PC-9 (cell line): ENCODE measurements at regions of chr9 and their contacts with region 1.

Region 1: GRCh38 chr9:107489687-107490605 is at the start of gene KLF4:
- DNase-seq: peak; percentile 78 to 92
- H3K4me3 ChIP-seq: peak within 1 kb of the TSS; percentile 100
- H3K27ac ChIP-seq: peak within 1 kb of the TSS; percentile 85
- H3K4me1 ChIP-seq: peaks cover 29% of the 10 kb centered on the region
- H3K27me3 ChIP-seq: no peaks in the 10 kb centered on the region
- CTCF ChIP-seq: no peak
- total RNA-seq, gene KLF4: 48.5 and 49.0 TPM in 2 replicates

Region 2: DNA sequence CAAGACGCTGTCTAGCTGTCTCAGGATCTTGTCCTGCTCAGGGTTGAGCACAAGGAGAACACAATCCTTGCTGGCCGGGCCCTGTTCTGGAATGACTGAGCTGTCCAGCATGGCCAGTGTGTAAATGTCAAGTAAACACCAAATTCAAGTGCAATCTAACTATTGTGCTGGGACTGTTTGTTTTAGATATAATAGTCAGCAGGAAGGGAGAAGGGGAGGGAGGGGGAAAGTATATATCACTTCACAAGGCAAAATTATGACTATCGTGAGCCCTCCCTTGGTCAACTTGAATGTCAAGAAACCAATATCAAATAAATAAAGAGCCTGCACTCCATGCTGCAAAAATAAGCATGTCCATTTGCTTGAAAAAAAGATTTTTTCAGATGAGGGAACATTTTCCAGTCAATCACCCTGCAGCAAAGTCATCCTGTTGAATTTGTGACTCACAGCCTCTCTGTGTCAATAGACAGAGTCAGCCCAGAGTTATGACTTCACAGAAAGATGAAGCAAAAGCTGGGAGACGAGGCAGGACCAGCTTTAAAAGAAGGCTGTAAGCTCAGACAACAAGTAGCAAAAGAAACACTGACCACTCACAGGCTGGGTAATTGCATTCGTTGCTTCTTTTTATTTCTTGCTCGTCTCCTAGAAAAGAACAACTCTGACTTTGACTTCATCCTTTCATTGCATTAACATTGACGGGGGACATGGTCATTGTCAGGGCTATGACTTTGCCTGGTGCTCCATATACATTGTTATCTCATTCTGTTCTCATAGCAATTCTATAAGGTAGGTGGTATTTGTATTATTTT is 14.8 kb after region 1 on chr9:
- CTCF ChIA-PET with region 1: no interaction called
- POLR2A ChIA-PET with region 1: interaction called, 14 read pairs
- intact Hi-C with region 1: no loop called
- DNase-seq: peak; percentile 52 to 95
- H3K4me3 ChIP-seq: peak overlapping the region; percentile 26; the same call in 1 of the 2 replicates
- H3K27ac ChIP-seq: peak overlapping the region; percentile 91
- H3K4me1 ChIP-seq: peaks cover 24% of the 10 kb centered on the region
- H3K27me3 ChIP-seq: no peaks in the 10 kb centered on the region
- CTCF ChIP-seq: no peak

Region 3: DNA sequence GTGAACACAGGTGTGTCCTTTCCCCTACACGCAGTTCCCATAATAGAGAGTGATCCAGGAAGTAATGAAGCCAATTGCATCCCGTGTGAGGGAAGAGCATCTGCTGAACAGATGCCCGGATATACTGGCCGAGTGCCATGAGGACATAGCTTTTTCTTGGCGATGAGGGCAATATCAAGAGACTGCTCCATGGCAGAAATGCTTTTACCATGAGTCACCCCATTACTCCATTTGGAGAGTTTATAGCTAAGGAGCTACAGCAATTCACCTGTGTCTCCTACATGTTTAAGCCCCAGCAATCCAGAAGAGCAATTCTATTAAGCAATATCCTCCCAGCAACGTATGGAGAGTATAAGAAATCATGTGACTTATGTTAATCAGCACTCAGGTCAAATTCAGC is 221.6 kb after region 1 on chr9:
- CTCF ChIA-PET with region 1: no interaction called
- POLR2A ChIA-PET with region 1: no interaction called
- intact Hi-C with region 1: loop called (anchors 2 kb)
- DNase-seq: peak; percentile 80 to 92
- H3K4me3 ChIP-seq: no peak overlapping the region
- H3K27ac ChIP-seq: peak overlapping the region; percentile 79
- H3K4me1 ChIP-seq: peaks cover 28% of the 10 kb centered on the region
- H3K27me3 ChIP-seq: no peaks in the 10 kb centered on the region
- CTCF ChIP-seq: no peak

Region 4: GRCh38 chr9:107847978-107848964 is 358.3 kb after region 1 on chr9:
- CTCF ChIA-PET with region 1: no interaction called
- POLR2A ChIA-PET with region 1: no interaction called
- intact Hi-C with region 1: loop called (anchors 10 kb)
- DNase-seq: peak in 1 of 2 experiments; percentile 46
- H3K4me3 ChIP-seq: no peak overlapping the region
- H3K27ac ChIP-seq: no peak overlapping the region
- H3K4me1 ChIP-seq: peaks cover 12% of the 10 kb centered on the region; the same call in 1 of the 2 replicates
- H3K27me3 ChIP-seq: no peaks in the 10 kb centered on the region
- CTCF ChIP-seq: no peak

Region 5: GRCh38 chr9:108053555-108054061 is 563.7 kb after region 1 on chr9:
- CTCF ChIA-PET with region 1: no interaction called
- POLR2A ChIA-PET with region 1: no interaction called
- intact Hi-C with region 1: loop called (anchors 2 kb)
- DNase-seq: no peak
- H3K4me3 ChIP-seq: no peak overlapping the region
- H3K27ac ChIP-seq: no peak overlapping the region
- H3K4me1 ChIP-seq: peaks cover 58% of the 10 kb centered on the region
- H3K27me3 ChIP-seq: no peaks in the 10 kb centered on the region
- CTCF ChIP-seq: no peak

Region 6: DNA sequence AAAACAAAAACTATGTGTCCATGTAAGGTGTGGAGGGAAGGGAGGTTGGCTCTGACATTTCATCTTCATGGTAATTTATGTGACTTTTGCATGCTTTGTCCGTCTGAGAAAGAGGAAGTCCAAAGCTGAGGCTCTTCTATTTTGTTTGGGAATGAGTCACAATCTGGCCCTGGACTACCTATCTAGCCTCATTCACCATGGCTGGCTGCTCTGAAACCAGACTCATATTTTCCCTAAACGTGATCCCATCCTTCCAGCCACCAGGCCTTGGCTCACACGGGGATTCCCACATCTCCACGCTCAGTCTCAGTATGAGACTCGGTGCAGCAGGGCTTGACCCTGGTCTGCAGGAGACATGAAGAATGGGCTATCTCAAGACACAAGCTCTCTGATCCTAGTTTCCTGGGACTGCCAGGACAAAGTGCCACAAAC is 693.0 kb after region 1 on chr9:
- CTCF ChIA-PET with region 1: no interaction called
- POLR2A ChIA-PET with region 1: no interaction called
- intact Hi-C with region 1: loop called (anchors 10 kb)
- DNase-seq: no peak
- H3K4me3 ChIP-seq: no peak overlapping the region
- H3K27ac ChIP-seq: no peak overlapping the region
- H3K4me1 ChIP-seq: no peaks in the 10 kb centered on the region
- H3K27me3 ChIP-seq: no peaks in the 10 kb centered on the region
- CTCF ChIP-seq: no peak

Region 7: DNA sequence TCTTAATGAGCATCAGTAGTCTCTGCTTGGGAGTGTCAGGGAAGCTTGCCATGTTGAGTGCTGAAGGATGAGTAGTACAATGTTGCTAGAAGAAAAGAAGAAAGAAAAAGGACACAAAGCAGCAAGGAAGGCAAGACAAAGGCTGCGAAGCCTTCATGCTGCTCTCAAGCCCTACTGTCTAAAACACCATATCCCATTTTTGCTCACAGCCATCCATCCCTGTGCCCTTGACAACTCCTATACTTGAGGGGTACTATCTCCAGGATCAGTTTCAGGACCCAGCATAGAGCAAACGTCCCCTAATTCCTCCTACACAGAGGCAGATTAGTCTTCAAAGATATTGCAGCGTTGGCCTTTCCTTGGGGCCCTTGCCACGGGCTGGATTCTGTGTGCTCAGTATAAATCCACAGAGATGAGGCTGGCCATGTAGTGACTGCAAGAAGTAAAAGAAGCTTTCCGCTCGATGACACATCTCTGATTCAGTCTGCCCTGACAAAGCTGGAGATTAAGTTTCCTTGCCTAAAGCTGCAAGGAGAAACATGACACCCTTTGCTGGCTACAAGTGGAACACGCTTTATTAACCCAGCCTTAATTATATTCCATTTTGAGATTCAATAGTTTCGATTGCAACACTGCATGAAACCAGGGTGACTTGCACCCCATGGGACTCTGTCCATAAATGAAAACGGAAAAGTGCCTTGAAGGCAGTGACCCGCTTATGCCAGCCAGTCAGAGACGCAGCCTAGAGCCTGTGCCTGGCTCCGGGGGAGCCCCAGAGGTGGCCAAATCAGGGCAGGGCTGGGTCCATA is 1061.3 kb after region 1 on chr9:
- CTCF ChIA-PET with region 1: no interaction called
- POLR2A ChIA-PET with region 1: interaction called, 3 read pairs
- intact Hi-C with region 1: loop called (anchors 5 kb)
- DNase-seq: peak; percentile 75 to 99
- H3K4me3 ChIP-seq: peak overlapping the region; percentile 38; the same call in 1 of the 2 replicates
- H3K27ac ChIP-seq: peak overlapping the region; percentile 99
- H3K4me1 ChIP-seq: peaks cover 59% of the 10 kb centered on the region
- H3K27me3 ChIP-seq: no peaks in the 10 kb centered on the region
- CTCF ChIP-seq: no peak